ENCODE measurements at regions of chr5 and their contacts with region 1.

Region 1: DNA sequence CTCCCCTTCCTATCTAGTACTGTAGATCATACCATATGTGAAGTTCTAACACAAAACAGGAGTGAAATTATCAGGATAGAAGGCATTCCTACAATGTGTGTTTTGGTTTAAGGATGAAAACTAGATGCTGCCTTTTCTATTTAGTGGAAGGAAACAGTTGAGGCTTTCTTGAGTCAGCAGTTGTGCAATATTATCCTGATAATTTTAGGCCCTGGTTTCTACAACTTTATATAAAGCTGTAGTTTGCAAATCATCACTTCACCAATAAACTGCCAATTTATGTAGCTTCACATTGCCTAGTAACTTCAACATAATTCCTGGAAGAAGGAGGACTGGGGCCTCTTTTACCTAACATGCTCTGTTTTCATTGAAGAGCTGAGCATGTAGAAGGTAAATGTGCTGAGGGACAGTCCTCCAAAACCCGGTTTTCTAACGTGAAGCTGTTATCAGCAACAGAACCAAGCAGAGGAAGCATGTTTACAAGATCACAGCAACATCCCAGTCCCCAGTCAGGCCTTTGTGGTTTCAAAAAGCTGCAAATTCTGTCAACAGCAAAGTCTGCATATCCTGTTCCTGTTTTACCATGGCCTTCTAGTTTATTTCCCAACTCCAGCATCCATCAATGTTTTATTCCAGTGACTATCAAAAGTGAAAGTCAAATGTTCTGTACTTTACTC is 513.4 kb upstream of the MEF2C start:
- DNase-seq: peak; percentile 57
- ATAC-seq: peak; percentile 79
- H3K4me3 ChIP-seq: peak overlapping the region; percentile 1; the same call in 1 of the 2 replicates
- H3K27ac ChIP-seq: peak overlapping the region; percentile 63
- H3K4me1 ChIP-seq: peaks cover 14% of the 10 kb centered on the region
- H3K27me3 ChIP-seq: no peaks in the 10 kb centered on the region
- CTCF ChIP-seq: no peak
- EP300 ChIP-seq: no peak
- POLR2A ChIP-seq: no peak
- RAD21 ChIP-seq: no peak

Region 2: GRCh38 chr5:88438011-88438410 is 958.4 kb before region 1 on chr5:
- CTCF ChIA-PET with region 1: no interaction called
- POLR2A ChIA-PET with region 1: no interaction called
- RAD21 ChIA-PET with region 1: no interaction called
- SMC1A ChIA-PET with region 1: no interaction called
- in situ Hi-C with region 1: no loop called
- intact Hi-C with region 1: no loop called
- DNase-seq: no peak
- ATAC-seq: no peak
- H3K4me3 ChIP-seq: no peak overlapping the region
- H3K27ac ChIP-seq: no peak overlapping the region
- H3K4me1 ChIP-seq: no peaks in the 10 kb centered on the region
- H3K27me3 ChIP-seq: no peaks in the 10 kb centered on the region
- CTCF ChIP-seq: no peak
- EP300 ChIP-seq: no peak
- POLR2A ChIP-seq: no peak
- RAD21 ChIP-seq: no peak

Region 3: DNA sequence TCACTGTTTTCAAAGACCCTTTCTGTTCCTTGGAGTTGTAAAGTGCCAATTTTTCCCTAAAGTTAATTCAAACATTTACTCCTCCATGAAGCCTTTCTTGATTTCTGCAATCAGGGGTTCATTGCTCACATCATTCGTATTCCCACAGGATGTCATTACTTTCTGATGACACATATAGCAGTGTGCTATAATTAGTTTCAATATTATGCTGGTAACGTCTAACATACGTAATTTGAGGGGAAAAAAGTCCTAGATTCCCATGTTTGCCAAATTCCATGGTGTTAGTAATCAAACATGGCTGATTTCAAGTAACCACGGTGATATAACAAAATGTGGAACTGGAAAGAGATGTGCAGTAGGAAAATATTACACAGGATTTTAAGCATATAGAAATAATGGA is 45.2 kb before region 1 on chr5:
- CTCF ChIA-PET with region 1: no interaction called
- POLR2A ChIA-PET with region 1: no interaction called
- RAD21 ChIA-PET with region 1: interaction called, 6 read pairs
- SMC1A ChIA-PET with region 1: interaction called, 26 read pairs
- in situ Hi-C with region 1: no loop called
- intact Hi-C with region 1: no loop called
- DNase-seq: no peak
- ATAC-seq: peak; percentile 16
- H3K4me3 ChIP-seq: no peak overlapping the region
- H3K27ac ChIP-seq: peak overlapping the region; percentile 68; the same call in 1 of the 2 replicates
- H3K4me1 ChIP-seq: peaks cover 18% of the 10 kb centered on the region; the same call in 1 of the 2 replicates
- H3K27me3 ChIP-seq: no peaks in the 10 kb centered on the region
- CTCF ChIP-seq: no peak
- EP300 ChIP-seq: 0 out of 4 replicates have a peak, but pooled peaks of 1 of the 2 experiments have one; percentile 54
- POLR2A ChIP-seq: no peak
- RAD21 ChIP-seq: no peak

Region 4: DNA sequence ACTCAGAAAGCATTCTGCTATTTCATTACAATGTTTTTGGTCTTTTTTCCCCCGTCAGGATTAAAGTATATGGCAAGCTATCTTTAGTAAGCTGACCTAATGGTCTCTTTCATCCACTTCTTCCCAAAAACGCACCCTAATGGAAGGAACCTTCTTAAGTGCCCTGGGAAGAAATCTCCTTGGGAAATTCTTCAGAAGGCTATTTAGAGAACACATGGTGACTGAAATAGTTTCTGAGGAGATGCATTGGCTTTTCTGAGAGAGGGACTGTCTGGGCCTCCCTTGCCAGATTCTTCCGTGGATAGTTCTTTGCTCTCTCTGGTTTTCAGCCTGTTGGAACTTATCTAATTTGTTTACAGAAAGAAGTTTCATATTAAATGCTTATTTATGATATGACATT is 10.6 kb after region 1 on chr5:
- CTCF ChIA-PET with region 1: interaction called, 11 read pairs
- POLR2A ChIA-PET with region 1: no interaction called
- RAD21 ChIA-PET with region 1: no interaction called
- SMC1A ChIA-PET with region 1: interaction called, 31 read pairs
- in situ Hi-C with region 1: no loop called
- intact Hi-C with region 1: no loop called
- DNase-seq: no peak
- ATAC-seq: no peak
- H3K4me3 ChIP-seq: no peak overlapping the region
- H3K27ac ChIP-seq: no peak overlapping the region
- H3K4me1 ChIP-seq: no peaks in the 10 kb centered on the region
- H3K27me3 ChIP-seq: no peaks in the 10 kb centered on the region
- CTCF ChIP-seq: no peak
- EP300 ChIP-seq: no peak
- POLR2A ChIP-seq: no peak
- RAD21 ChIP-seq: no peak